ENCODE measurements at regions of chr17 and their contacts with region 1.

Region 1: DNA sequence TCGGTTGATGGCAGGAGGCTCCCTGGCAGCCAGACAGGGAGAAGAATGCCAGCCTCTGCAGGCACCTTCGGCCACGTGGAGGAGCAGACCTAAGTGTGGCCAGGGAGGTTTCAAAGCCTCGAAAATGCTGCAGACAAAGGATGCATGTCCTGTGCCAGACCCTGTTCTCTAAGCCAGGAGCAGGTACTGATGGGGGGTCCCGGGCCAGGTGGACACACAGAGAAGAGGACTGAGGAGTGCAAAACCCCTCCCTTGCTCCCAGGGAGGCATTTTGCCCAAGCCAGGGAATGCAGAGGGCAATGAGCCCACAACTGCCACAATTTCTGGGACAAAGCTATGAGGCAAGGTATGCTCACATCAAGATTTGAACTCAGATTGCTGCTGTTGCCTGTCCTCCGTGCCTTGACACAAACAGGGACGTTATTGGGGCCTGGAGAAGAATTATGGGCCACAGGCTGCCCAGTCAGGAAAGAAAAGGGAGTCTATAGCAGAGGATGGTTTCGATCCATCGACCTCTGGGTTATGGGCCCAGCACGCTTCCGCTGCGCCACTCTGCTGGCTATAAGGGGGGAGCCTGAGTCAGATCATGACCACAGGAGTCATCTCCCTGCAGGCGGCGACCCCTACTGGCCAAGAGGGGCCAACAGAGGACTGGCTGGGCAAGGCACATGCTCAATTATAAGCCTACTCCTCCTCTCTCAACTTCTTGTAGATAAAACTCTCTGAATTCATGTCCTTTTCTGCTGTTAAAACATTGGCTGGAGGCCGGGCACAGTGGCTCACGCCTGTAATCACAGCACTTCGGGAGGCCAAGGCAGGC is 25.1 kb upstream of the FOXK2 start:
- DNase-seq: peak; percentile 83 to 92
- ATAC-seq: peak; percentile 71 to 82 (median 79)
- H3K4me3 ChIP-seq: peak overlapping the region; percentile 34
- H3K27ac ChIP-seq: peak overlapping the region; percentile 38
- H3K4me1 ChIP-seq: peaks cover 5% of the 10 kb centered on the region
- H3K27me3 ChIP-seq: no peaks in the 10 kb centered on the region
- CTCF ChIP-seq: peak; percentile 75

Region 2: DNA sequence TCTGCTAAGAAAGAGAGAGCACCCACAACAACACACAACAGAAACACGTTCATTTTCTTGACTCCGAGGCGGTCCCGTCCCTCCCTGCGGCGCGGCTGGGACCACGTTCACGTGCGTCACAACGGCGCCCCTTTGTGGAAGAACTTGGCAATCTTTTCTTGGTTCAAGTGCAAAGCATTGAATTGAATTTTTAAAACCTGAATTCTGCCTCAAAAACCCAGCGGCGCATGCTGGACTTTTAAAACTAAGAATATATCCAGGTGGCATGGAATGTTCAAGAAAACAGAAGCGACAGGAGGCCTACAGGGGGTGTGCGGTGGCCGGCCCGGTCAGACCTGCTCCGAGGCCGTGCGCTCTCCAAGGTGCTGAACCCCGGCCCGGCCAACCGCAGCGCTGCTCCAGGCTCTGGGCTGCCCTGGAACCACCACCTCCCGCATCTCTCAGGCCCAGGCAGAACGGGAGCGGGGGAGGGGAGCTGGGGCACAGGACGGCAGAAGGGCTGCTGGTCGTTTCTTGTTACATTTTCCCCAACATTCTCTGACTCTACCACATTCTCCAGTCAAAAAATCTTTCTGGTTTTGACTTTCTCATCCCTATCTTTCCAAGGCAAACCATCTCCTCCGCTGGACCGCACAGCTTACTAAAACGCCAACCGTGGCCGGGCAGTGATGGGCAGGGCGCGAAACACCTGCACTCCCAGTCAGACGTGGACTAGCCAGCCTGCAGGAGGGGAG is 79.7 kb before region 1 on chr17:
- intact Hi-C with region 1: no loop called
- DNase-seq: peak; percentile 78 to 84
- ATAC-seq: peak; percentile 67 to 79 (median 72)
- H3K4me3 ChIP-seq: no peak overlapping the region
- H3K27ac ChIP-seq: no peak overlapping the region
- H3K4me1 ChIP-seq: peaks cover 15% of the 10 kb centered on the region
- H3K27me3 ChIP-seq: no peaks in the 10 kb centered on the region
- CTCF ChIP-seq: peak; percentile 70

Region 3: GRCh38 chr17:82551779-82552457 is 57.5 kb after region 1 on chr17:
- intact Hi-C with region 1: loop called in 1 of 2 experiments (anchors 5 kb)
- DNase-seq: peak; percentile 69 to 82
- ATAC-seq: peak; percentile 78 to 81 (median 79)
- H3K4me3 ChIP-seq: no peak overlapping the region
- H3K27ac ChIP-seq: peak overlapping the region; percentile 78
- H3K4me1 ChIP-seq: peaks cover 55% of the 10 kb centered on the region
- H3K27me3 ChIP-seq: no peaks in the 10 kb centered on the region
- CTCF ChIP-seq: peak; percentile 72